IMR-90 (cell line): ENCODE measurements at regions of chr7 and their contacts with region 1.

Region 1: GRCh38 chr7:116525913-116526861 is 1.4 kb downstream of the CAV1 start:
- DNase-seq: peak; percentile 88
- ATAC-seq: peak; percentile 69
- H3K4me3 ChIP-seq: peak overlapping the region; percentile 72
- H3K27ac ChIP-seq: peak overlapping the region; percentile 97
- H3K4me1 ChIP-seq: peaks cover 11% of the 10 kb centered on the region
- H3K27me3 ChIP-seq: no peaks in the 10 kb centered on the region
- CTCF ChIP-seq: peak; percentile 87
- POLR2A ChIP-seq: peak; percentile 73
- RAD21 ChIP-seq: peak; percentile 78

Region 2: GRCh38 chr7:116173051-116174028 is 352.8 kb before region 1 on chr7:
- CTCF ChIA-PET with region 1: no interaction called
- POLR2A ChIA-PET with region 1: interaction called, 3 read pairs
- dilution Hi-C with region 1: no loop called
- in situ Hi-C with region 1: loop called (anchors 10 kb)
- intact Hi-C with region 1: loop called (anchors 2 kb)
- DNase-seq: peak; percentile 69
- ATAC-seq: peak; percentile 31
- H3K4me3 ChIP-seq: no peak overlapping the region
- H3K27ac ChIP-seq: no peak overlapping the region
- H3K4me1 ChIP-seq: peaks cover 15% of the 10 kb centered on the region
- H3K27me3 ChIP-seq: no peaks in the 10 kb centered on the region
- CTCF ChIP-seq: peak; percentile 71
- POLR2A ChIP-seq: no peak
- RAD21 ChIP-seq: peak; percentile 87

Region 3: DNA sequence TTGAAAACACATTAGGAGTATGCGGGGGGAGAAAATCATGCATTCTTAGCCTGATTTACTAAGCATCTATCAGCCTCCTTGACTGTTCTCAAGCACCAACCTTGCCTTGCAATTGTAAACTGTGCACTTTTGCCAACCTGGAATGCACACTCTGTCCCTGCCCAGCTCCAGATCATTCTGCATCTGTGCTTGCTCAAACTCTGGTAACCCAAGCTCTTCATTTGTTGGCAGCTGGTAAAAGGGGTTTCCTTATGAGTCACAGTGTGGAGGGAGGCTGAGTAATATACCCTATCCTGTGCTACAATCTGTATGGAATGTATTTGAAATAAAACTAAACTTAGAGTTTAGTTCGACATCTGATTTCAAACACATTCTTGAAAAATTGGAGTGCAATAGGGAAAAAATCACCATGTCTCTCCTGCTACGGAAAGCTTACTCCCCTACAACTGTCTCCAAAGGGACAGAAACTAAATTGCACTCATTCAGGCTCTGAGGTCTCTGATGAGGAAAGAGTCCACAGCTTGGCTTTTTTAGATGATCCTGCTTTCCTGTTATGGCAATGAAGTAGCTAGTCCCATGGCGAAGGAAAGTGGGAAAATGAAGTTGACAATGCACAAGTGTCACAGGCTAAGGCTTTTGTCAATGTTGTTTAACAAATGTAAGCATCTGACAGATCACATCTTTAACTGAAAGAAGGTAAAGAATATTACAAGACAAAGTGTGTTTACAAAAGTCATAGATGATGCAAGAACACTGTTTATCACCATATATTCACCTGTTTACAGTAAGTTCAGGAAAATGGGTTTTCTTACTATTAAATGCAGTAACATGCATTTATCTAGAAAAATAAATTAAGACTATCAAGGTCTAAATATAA is 254.0 kb before region 1 on chr7:
- CTCF ChIA-PET with region 1: no interaction called
- POLR2A ChIA-PET with region 1: interaction called, 5 read pairs
- dilution Hi-C with region 1: loop called (anchors 25 kb)
- in situ Hi-C with region 1: no loop called
- intact Hi-C with region 1: loop called (anchors 2 kb)
- DNase-seq: peak; percentile 98
- ATAC-seq: peak; percentile 89
- H3K4me3 ChIP-seq: peak overlapping the region; percentile 36; the same call in 1 of the 2 replicates
- H3K27ac ChIP-seq: peak overlapping the region; percentile 90
- H3K4me1 ChIP-seq: peaks cover 16% of the 10 kb centered on the region
- H3K27me3 ChIP-seq: no peaks in the 10 kb centered on the region
- CTCF ChIP-seq: no peak
- POLR2A ChIP-seq: no peak
- RAD21 ChIP-seq: peak; percentile 11

Region 4: GRCh38 chr7:116443101-116443523 is 83.1 kb before region 1 on chr7:
- CTCF ChIA-PET with region 1: interaction called, 5 read pairs
- POLR2A ChIA-PET with region 1: interaction called, 4 read pairs
- dilution Hi-C with region 1: no loop called
- in situ Hi-C with region 1: no loop called
- intact Hi-C with region 1: loop called (anchors 1 kb)
- DNase-seq: peak; percentile 97
- ATAC-seq: peak; percentile 76
- H3K4me3 ChIP-seq: no peak overlapping the region
- H3K27ac ChIP-seq: 0 out of 2 replicates have a peak overlapping the region, but pooled peaks have one; percentile 87
- H3K4me1 ChIP-seq: peaks cover 14% of the 10 kb centered on the region
- H3K27me3 ChIP-seq: no peaks in the 10 kb centered on the region
- CTCF ChIP-seq: no peak
- POLR2A ChIP-seq: no peak
- RAD21 ChIP-seq: no peak

Region 5: GRCh38 chr7:116576350-116577319 is 50.4 kb after region 1 on chr7:
- CTCF ChIA-PET with region 1: no interaction called
- POLR2A ChIA-PET with region 1: interaction called, 4 read pairs
- dilution Hi-C with region 1: no loop called
- in situ Hi-C with region 1: loop called (anchors 10 kb)
- intact Hi-C with region 1: loop called (anchors 2 kb)
- DNase-seq: peak; percentile 98
- ATAC-seq: peak; percentile 95
- H3K4me3 ChIP-seq: no peak overlapping the region
- H3K27ac ChIP-seq: peak overlapping the region; percentile 99
- H3K4me1 ChIP-seq: peaks cover 12% of the 10 kb centered on the region
- H3K27me3 ChIP-seq: no peaks in the 10 kb centered on the region
- CTCF ChIP-seq: no peak
- POLR2A ChIP-seq: no peak
- RAD21 ChIP-seq: no peak; the same call in 1 of the 2 replicates

Region 6: GRCh38 chr7:116752305-116753074 is 226.3 kb after region 1 on chr7:
- CTCF ChIA-PET with region 1: no interaction called
- POLR2A ChIA-PET with region 1: no interaction called
- dilution Hi-C with region 1: no loop called
- in situ Hi-C with region 1: no loop called
- intact Hi-C with region 1: no loop called
- DNase-seq: no peak
- ATAC-seq: no peak
- H3K4me3 ChIP-seq: no peak overlapping the region
- H3K27ac ChIP-seq: no peak overlapping the region
- H3K4me1 ChIP-seq: no peaks in the 10 kb centered on the region
- H3K27me3 ChIP-seq: no peaks in the 10 kb centered on the region
- CTCF ChIP-seq: no peak
- POLR2A ChIP-seq: no peak
- RAD21 ChIP-seq: no peak